ENCODE measurements at regions of chr3 and their contacts with region 1.

Region 1: GRCh38 chr3:52614689-52615088 is 71.0 kb downstream of the PBRM1 start:
- DNase-seq: no peak
- H3K4me3 Mint-ChIP-seq: no peak overlapping the region
- H3K27ac Mint-ChIP-seq: no peak overlapping the region
- H3K4me1 Mint-ChIP-seq: no peaks in the 10 kb centered on the region
- H3K27me3 Mint-ChIP-seq: no peaks in the 10 kb centered on the region

Region 2: DNA sequence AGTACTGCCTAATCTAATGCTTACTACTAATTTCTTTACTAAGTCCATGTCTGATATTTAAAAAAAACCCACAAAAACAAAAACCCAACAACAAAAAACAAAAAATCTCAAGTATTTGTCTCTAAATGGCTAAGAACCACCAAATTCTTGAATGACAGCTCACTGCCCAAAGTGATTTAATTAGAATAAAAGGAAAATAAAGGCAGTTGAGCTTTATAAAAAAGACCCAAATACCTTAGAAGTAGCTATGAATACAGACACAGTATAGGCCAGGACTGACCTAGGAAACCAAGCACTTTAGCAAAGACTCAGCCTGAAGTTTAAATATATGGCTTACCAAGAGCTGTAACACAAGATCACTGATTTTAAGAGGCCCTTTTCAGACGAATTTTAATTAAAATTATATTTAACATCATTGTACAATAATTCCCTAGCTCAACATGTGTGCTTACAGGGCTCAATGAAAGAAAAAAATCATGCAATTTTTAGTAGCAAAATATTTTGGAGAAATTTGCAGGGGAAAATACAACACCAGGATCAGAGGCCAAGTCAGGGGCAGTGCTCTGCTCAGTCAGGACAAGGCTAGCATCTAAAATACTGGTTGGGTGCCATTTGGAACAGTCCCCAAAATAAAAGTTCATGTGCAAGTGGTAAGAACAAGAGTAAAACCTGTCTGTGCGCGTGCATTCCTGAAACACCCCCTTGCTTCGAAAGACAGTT is 53.5 kb before region 1 on chr3:
- intact Hi-C with region 1: loop called (anchors 10 kb)
- DNase-seq: no peak
- H3K4me3 Mint-ChIP-seq: no peak overlapping the region
- H3K27ac Mint-ChIP-seq: no peak overlapping the region
- H3K4me1 Mint-ChIP-seq: peaks cover 2% of the 10 kb centered on the region
- H3K27me3 Mint-ChIP-seq: no peaks in the 10 kb centered on the region

Measured in activated CD4-positive, alpha-beta T cell treated with anti-CD3 and anti-CD28 coated beads, Interleukin-2, amount 10 ng/mL, durations not matched to agents 24 days and 14 days (primary cell).